Sciatic nerve (tissue), 2 donors: ENCODE measurements at regions of chr16 and their contacts with region 1.

Region 1: GRCh38 chr16:82317411-82318167 is 147.6 kb upstream of the MPHOSPH6 start:
- DNase-seq: no peak
- ATAC-seq: no peak

Region 2: DNA sequence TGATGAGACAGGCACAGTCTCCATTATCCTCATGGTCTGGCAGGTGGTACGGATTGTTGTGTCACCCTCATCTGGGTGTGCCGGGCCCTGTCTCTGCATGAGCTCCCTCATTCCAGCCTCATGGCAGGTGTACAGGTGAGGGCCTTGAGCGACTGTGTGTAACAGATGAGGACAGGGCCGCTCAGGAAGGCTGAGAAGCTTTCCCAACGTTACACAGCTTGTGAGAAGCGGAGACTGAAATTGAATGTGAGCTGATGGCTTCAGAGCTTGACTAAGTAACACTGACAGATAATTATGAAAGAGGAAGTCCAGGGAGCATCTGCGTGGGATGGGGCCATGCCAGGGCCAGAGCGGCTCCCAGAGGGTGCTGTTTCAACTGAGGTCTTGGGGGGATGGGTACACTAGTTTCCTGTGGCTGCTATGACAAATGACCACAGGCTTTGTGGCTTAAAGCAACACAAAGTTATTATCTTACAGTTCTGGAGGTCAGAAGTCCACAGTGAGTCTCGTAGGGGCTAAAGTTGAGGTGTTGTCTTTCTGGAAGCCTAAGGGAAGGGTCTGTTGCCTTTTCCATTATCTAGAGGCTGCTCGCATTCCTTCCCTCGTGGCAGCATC is 836.3 kb before region 1 on chr16:
- intact Hi-C with region 1: no loop called
- DNase-seq: no peak
- ATAC-seq: peak; percentile 78

Region 3: GRCh38 chr16:82329485-82330180 is 12.0 kb after region 1 on chr16:
- intact Hi-C with region 1: loop called (anchors 1 kb)
- DNase-seq: no peak
- ATAC-seq: no peak